PC-3 (cell line): ENCODE measurements at regions of chr14 and their contacts with region 1.

Region 1: GRCh38 chr14:28494196-28494595 is 272.4 kb upstream of the FOXG1 start:
- DNase-seq: peak; percentile 96
- ATAC-seq: peak; percentile 90
- H3K4me3 ChIP-seq: peak overlapping the region; percentile 42
- H3K27ac ChIP-seq: peak overlapping the region; percentile 97
- H3K4me1 ChIP-seq: peaks cover 36% of the 10 kb centered on the region
- H3K27me3 ChIP-seq: no peaks in the 10 kb centered on the region
- CTCF ChIP-seq: no peak

Region 2: DNA sequence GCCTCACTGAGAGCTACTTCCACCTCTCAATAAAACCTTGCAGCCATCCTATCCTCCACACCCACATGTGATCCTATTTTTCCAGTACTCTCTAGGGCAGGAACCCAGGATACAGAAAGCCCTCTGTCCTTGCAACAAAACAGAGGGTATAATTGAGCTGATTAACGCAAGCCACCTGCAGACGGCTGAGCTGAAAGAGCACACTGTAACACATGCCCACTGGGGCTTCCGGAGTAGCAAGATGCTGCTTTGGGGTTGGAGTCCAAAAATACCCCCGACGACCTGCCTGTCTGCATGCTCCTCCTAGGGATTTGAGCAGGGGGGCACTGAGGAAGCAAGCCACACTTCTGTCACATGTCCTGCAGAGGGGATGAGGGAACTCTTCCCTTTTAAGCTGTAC is 128.7 kb before region 1 on chr14:
- CTCF ChIA-PET with region 1: no interaction called
- POLR2A ChIA-PET with region 1: no interaction called
- intact Hi-C with region 1: no loop called
- DNase-seq: no peak
- ATAC-seq: no peak
- H3K4me3 ChIP-seq: no peak overlapping the region
- H3K27ac ChIP-seq: no peak overlapping the region
- H3K4me1 ChIP-seq: no peaks in the 10 kb centered on the region
- H3K27me3 ChIP-seq: no peaks in the 10 kb centered on the region
- CTCF ChIP-seq: no peak

Region 3: GRCh38 chr14:28577711-28578131 is 83.5 kb after region 1 on chr14:
- CTCF ChIA-PET with region 1: no interaction called
- POLR2A ChIA-PET with region 1: no interaction called
- intact Hi-C with region 1: loop called (anchors 2 kb)
- DNase-seq: peak; percentile 95
- ATAC-seq: peak; percentile 82
- H3K4me3 ChIP-seq: peak overlapping the region; percentile 75
- H3K27ac ChIP-seq: peak overlapping the region; percentile 86
- H3K4me1 ChIP-seq: peaks cover 23% of the 10 kb centered on the region
- H3K27me3 ChIP-seq: no peaks in the 10 kb centered on the region
- CTCF ChIP-seq: no peak

Region 4: DNA sequence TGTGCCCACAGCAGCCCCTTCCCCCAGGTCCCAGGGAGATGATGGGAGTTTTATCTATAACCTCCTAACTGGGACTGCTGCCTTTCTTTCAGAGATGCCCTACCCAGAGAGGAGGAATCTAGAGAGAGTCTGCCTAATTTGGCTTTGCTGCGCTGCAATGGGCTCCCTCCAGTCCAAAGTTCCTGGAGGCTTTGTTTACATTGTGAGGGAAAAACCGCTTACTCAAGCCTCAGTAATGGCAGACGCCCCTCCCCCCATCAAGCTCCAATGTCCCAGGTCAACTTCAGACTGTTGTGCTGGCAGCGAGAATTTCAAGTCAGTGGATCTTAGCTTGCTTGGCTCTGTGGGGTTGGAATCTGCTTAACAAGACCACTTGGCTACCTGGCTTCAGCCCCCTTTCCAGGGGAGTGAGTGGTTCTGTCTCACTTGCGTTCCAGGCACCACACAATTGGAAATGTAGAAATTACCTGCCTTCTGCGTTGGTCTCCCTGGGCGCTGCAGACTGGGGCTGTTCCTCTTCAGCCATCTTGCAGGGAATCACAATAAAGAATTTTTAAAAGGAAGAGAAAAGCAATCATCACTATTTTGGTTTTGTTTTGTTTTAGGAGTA is 534.9 kb after region 1 on chr14:
- CTCF ChIA-PET with region 1: no interaction called
- POLR2A ChIA-PET with region 1: no interaction called
- intact Hi-C with region 1: no loop called
- DNase-seq: peak; percentile 59
- ATAC-seq: peak; percentile 85
- H3K4me3 ChIP-seq: no peak overlapping the region
- H3K27ac ChIP-seq: no peak overlapping the region
- H3K4me1 ChIP-seq: peaks cover 11% of the 10 kb centered on the region
- H3K27me3 ChIP-seq: no peaks in the 10 kb centered on the region
- CTCF ChIP-seq: no peak